ENCODE measurements at regions of chr1 and their contacts with region 1.

Region 1: GRCh38 chr1:28329395-28330153 is 734 bp downstream of the MED18 start:
- DNase-seq: peak; percentile 50
- ATAC-seq: peak; percentile 11
- H3K4me3 Mint-ChIP-seq: peak overlapping the region; percentile 92
- H3K27ac Mint-ChIP-seq: peak overlapping the region; percentile 97
- H3K4me1 Mint-ChIP-seq: peaks cover 49% of the 10 kb centered on the region
- H3K27me3 Mint-ChIP-seq: peaks cover 2% of the 10 kb centered on the region
- CTCF ChIP-seq: no peak

Region 2: DNA sequence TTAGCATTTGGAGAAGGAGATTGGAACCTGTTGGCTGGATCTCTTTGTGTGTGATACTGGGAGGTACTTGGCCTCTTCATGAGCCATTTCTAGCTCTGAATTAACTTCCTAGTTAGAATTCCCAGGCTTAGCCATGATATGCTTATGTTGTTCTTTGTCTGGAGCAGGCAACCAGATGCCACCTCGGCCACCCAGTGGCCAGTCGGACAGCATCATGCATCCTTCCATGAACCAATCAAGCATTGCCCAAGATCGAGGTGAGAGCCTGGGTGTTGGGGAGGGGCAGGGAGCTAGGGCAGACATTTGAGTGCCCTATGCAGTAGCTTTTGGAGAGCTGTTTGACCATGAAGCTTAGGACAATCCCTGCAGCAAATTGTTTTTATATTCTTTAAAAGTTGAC is 1568.4 kb before region 1 on chr1:
- CTCF ChIA-PET with region 1: no interaction called
- POLR2A ChIA-PET with region 1: no interaction called
- intact Hi-C with region 1: no loop called
- DNase-seq: no peak
- ATAC-seq: no peak
- H3K4me3 Mint-ChIP-seq: no peak overlapping the region
- H3K27ac Mint-ChIP-seq: no peak overlapping the region
- H3K4me1 Mint-ChIP-seq: peaks cover 5% of the 10 kb centered on the region
- H3K27me3 Mint-ChIP-seq: no peaks in the 10 kb centered on the region
- CTCF ChIP-seq: no peak

Region 3: GRCh38 chr1:27772933-27773825 is 556.4 kb before region 1 on chr1 and contains the start of gene STX12:
- CTCF ChIA-PET with region 1: no interaction called
- POLR2A ChIA-PET with region 1: interaction called, 3 read pairs
- intact Hi-C with region 1: loop called (anchors 2 kb)
- DNase-seq: peak; percentile 97
- ATAC-seq: peak; percentile 93
- H3K4me3 Mint-ChIP-seq: peak within 1 kb of the TSS; percentile 93
- H3K27ac Mint-ChIP-seq: peak within 1 kb of the TSS; percentile 98
- H3K4me1 Mint-ChIP-seq: peaks cover 37% of the 10 kb centered on the region
- H3K27me3 Mint-ChIP-seq: no peaks in the 10 kb centered on the region
- CTCF ChIP-seq: no peak
- total RNA-seq, gene STX12: 33.5 and 42.4 TPM in 2 replicates

Region 4: DNA sequence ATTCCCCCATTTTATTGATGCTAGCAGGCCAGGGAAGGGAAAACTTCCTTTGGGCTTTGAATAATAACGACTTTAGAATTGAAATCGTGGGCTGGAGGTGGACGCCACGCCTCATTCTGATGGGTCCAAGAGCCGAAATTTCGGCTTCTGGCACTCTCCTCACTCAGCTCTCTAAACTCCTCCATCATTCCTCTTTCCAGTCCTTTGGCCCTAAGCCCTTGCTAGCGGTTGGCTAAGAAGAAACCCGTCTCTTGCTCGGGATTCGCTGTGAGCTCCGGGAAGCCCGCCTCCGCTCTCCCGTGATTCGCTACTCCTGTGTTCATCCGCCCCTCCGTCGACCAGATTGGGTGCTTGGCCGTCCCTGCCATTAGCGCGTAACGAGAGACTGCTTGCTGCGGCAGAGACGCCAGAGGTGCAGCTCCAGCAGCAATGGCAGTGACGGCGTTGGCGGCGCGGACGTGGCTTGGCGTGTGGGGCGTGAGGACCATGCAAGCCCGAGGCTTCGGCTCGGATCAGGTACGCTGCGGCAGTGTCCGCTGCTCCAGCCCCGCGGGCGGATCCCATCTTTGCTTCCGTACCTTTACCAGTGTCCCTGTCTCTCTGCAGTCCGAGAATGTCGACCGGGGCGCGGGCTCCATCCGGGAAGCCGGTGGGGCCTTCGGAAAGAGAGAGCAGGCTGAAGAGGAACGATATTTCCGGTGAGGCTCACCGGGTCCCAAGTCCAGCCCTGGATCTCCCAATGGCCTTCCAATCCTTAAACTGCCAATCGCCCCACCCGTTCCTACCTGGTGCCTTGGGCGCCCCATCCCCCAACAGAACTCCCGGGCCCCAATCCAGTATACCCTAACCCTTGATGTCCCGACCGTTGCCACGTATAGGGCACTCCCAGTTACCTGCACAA is 93.6 kb before region 1 on chr1 and contains the start of gene ATP5IF1:
- CTCF ChIA-PET with region 1: interaction called, 3 read pairs
- POLR2A ChIA-PET with region 1: interaction called, 30 read pairs
- intact Hi-C with region 1: loop called (anchors 1 kb)
- DNase-seq: peak; percentile 82
- ATAC-seq: peak; percentile 95
- H3K4me3 Mint-ChIP-seq: no peak within 1 kb of the TSS
- H3K27ac Mint-ChIP-seq: no peak within 1 kb of the TSS
- H3K4me1 Mint-ChIP-seq: peaks cover 27% of the 10 kb centered on the region
- H3K27me3 Mint-ChIP-seq: no peaks in the 10 kb centered on the region
- CTCF ChIP-seq: no peak
- total RNA-seq, gene ATP5IF1: 87.0 and 104 TPM in 2 replicates

Region 5: DNA sequence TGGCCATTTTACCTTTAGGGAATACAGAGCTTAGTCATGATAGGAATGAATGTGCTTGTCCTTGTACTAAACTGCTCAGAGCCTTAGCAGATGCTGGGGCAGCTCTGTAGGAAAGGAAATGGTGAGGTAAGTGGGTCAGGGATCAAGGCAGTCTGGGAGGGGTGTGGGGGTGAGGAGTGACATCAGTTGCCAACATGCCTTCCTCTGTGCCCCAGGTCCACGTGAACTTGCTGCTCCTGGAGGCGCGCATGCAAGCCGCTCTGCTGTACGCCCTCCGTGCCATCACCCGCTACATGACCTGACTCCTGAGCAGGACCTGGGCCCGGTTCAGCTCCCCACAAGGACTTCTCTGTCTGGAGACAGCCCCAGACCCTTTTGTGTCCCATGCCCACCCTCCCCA is 49.1 kb before region 1 on chr1:
- CTCF ChIA-PET with region 1: no interaction called
- POLR2A ChIA-PET with region 1: no interaction called
- intact Hi-C with region 1: no loop called
- DNase-seq: no peak
- ATAC-seq: no peak
- H3K4me3 Mint-ChIP-seq: no peak overlapping the region
- H3K27ac Mint-ChIP-seq: no peak overlapping the region
- H3K4me1 Mint-ChIP-seq: no peaks in the 10 kb centered on the region
- H3K27me3 Mint-ChIP-seq: no peaks in the 10 kb centered on the region
- CTCF ChIP-seq: no peak

Region 6: GRCh38 chr1:28359592-28360239 is 30.1 kb after region 1 on chr1:
- CTCF ChIA-PET with region 1: interaction called, 3 read pairs
- POLR2A ChIA-PET with region 1: interaction called, 12 read pairs
- intact Hi-C with region 1: no loop called
- DNase-seq: peak; percentile 50
- ATAC-seq: peak; percentile 75
- H3K4me3 Mint-ChIP-seq: no peak overlapping the region
- H3K27ac Mint-ChIP-seq: no peak overlapping the region
- H3K4me1 Mint-ChIP-seq: peaks cover 2% of the 10 kb centered on the region
- H3K27me3 Mint-ChIP-seq: no peaks in the 10 kb centered on the region
- CTCF ChIP-seq: peak; percentile 91

Region 7: GRCh38 chr1:28581536-28582247 is 252.1 kb after region 1 on chr1:
- CTCF ChIA-PET with region 1: no interaction called
- POLR2A ChIA-PET with region 1: interaction called, 28 read pairs
- intact Hi-C with region 1: no loop called
- DNase-seq: peak; percentile 94
- ATAC-seq: peak; percentile 90
- H3K4me3 Mint-ChIP-seq: peak overlapping the region; percentile 96
- H3K27ac Mint-ChIP-seq: peak overlapping the region; percentile 91
- H3K4me1 Mint-ChIP-seq: peaks cover 48% of the 10 kb centered on the region
- H3K27me3 Mint-ChIP-seq: no peaks in the 10 kb centered on the region
- CTCF ChIP-seq: no peak

Region 8: GRCh38 chr1:28736450-28737306 is 407.1 kb after region 1 on chr1 and contains the start of gene YTHDF2:
- CTCF ChIA-PET with region 1: interaction called, 3 read pairs
- POLR2A ChIA-PET with region 1: interaction called, 16 read pairs
- intact Hi-C with region 1: no loop called
- DNase-seq: peak; percentile 96
- ATAC-seq: peak; percentile 93
- H3K4me3 Mint-ChIP-seq: peak within 1 kb of the TSS; percentile 96
- H3K27ac Mint-ChIP-seq: peak within 1 kb of the TSS; percentile 91
- H3K4me1 Mint-ChIP-seq: peaks cover 30% of the 10 kb centered on the region
- H3K27me3 Mint-ChIP-seq: no peaks in the 10 kb centered on the region
- CTCF ChIP-seq: peak; percentile 83
- total RNA-seq, gene YTHDF2: 70.6 and 81.2 TPM in 2 replicates